ENCODE measurements at regions of chr10 and their contacts with region 1.

Region 1: DNA sequence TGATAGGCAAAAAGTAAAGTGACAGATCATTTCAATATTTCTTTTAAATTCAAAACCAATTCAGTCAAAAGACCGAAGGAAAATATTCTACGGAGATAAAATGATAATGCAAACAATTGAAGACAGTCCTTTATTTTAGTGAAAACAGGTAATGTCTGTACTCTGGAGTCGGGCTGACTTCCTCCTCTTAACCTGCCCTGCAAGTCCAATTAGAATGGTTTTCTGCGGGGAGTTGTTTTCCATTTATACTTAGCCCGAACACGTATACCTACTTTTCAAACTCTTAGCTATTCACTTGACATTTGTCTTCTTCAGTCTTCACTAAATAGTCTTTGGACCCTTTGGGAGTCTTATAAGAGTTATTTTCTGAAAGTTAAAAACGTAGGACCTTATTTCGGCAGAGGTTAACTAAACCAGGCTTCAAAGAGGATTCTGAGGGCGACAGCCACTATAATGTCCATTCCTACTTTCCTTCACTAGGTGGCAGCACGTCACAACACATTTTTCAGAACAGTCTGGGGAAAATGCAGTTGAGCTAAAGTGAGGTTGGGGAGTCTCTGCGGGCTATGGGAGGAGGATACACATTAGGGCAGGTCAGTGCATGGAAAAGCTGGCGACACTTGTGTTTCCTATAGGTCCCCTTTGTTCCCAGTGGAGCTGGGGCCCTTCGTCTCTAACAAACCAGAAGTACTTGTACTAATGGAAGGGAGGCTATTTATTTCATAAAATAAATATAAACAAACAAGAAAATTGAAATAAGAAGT is 472.0 kb downstream of the KCNMA1 start:
- DNase-seq: peak; percentile 16
- H3K4me3 Mint-ChIP-seq: no peak overlapping the region
- H3K27ac Mint-ChIP-seq: no peak overlapping the region
- H3K4me1 Mint-ChIP-seq: no peaks in the 10 kb centered on the region
- H3K27me3 Mint-ChIP-seq: peaks cover 14% of the 10 kb centered on the region

Region 2: DNA sequence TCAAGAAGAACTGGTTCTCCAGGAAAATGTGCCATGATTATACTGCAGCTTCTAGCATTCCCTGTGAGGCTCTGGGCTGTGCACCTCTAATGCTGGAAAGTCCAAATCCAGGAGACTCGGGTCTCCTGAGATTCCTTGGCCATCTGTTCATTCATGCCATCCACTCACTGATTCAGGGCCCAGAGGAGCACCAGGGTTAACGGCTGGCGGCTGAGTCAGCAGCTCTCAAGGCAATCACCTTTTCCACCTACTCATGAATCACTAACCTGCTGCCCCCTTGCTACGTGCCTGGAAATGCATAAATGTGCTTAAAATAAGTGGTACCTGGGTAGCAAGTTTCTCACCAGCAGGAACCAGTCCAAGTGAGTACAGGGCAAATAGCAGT is 339.2 kb after region 1 on chr10:
- intact Hi-C with region 1: no loop called
- DNase-seq: no peak
- H3K4me3 Mint-ChIP-seq: no peak overlapping the region
- H3K27ac Mint-ChIP-seq: no peak overlapping the region
- H3K4me1 Mint-ChIP-seq: no peaks in the 10 kb centered on the region
- H3K27me3 Mint-ChIP-seq: peaks cover 4% of the 10 kb centered on the region

Region 3: GRCh38 chr10:77641788-77642397 is 476.3 kb after region 1 on chr10:
- intact Hi-C with region 1: loop called (anchors 2 kb)
- DNase-seq: peak; percentile 22
- H3K4me3 Mint-ChIP-seq: no peak overlapping the region
- H3K27ac Mint-ChIP-seq: no peak overlapping the region
- H3K4me1 Mint-ChIP-seq: no peaks in the 10 kb centered on the region
- H3K27me3 Mint-ChIP-seq: peaks cover 18% of the 10 kb centered on the region

Region 4: DNA sequence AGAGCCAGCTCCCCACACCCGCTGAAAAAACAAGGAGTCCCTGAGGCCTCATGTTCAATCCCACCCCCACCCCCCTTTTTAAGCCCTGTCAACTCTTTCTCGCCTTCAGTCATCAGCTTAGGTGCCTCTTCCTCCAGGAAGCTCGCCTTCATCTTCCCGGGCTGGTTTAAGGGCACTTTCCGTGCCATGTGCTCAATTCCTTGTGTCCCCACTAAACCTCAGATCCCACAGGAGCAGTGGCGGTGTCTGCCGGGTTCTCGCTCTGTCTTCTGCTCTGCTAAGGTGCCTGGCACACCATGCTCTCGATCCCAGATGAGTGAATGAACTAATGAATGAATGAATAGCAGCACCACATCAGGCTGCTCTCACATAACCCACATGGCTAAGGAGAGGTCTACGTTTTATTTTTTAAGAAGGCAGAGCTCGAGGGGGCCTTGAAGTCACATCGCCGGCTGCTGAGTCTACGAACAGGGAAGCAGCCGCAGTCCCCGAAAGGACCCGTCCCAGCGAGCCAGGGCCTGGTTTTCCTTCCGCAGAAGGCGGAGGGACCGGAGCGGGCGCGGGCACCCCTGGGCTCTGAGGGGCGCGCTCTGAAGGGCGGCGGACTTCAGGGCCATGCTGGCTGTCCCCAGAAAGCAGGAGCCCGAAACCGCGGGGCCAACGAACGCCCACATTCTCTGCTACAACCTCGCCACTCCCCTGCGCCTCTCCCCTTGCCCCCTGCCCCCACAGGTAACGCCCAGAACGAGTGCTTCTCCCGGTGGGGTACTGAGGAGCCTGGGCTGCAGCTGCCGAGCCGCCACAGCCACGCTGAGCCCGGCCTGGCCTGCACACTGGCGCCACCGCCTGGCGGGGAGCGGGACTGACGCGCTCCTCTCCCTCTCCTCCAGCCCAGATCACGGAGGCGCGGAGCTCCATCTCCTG is 545.4 kb after region 1 on chr10:
- intact Hi-C with region 1: loop called (anchors 1 kb)
- DNase-seq: peak; percentile 59
- H3K4me3 Mint-ChIP-seq: peak overlapping the region; percentile 30
- H3K27ac Mint-ChIP-seq: no peak overlapping the region
- H3K4me1 Mint-ChIP-seq: peaks cover 5% of the 10 kb centered on the region
- H3K27me3 Mint-ChIP-seq: peaks cover 32% of the 10 kb centered on the region